Activated T-helper 1 cell treated with anti-CD3 and anti-CD28 coated beads, Interleukin-12 subunit alpha, Interleukin-12 subunit beta, Interleukin-2, Interleukin-4 antibody, amounts not matched to agents 30 ng/mL and 10 ng/mL and 1 ng/mL, durations not matched to agents 14 hours and 24 hours and 36 hours (primary cell): ENCODE measurements at regions of chr3 and their contacts with region 1.

Region 1: DNA sequence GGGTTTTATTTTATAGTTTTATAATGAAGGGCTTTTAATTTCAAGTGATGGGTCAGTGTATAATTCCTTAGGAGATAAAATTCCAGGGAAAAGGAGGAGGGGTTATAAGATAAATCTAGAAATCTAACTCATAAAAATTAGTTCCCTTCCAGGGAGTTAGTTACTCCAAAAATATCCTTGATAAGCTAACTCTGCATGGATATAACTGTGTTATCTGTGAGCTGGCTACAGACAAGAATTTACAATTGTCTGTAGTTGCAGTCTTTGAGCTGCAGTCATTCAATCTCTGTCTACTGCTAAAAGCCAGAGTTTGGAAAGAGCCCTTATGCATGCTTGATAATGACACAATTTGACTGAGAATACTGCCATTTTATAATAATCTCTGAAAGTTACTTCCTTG is 432.3 kb upstream of the TPRG1 start:
- DNase-seq: no peak
- H3K4me3 Mint-ChIP-seq: no peak overlapping the region
- H3K27ac Mint-ChIP-seq: no peak overlapping the region
- H3K4me1 Mint-ChIP-seq: no peaks in the 10 kb centered on the region
- H3K27me3 Mint-ChIP-seq: peaks cover 9% of the 10 kb centered on the region

Region 2: DNA sequence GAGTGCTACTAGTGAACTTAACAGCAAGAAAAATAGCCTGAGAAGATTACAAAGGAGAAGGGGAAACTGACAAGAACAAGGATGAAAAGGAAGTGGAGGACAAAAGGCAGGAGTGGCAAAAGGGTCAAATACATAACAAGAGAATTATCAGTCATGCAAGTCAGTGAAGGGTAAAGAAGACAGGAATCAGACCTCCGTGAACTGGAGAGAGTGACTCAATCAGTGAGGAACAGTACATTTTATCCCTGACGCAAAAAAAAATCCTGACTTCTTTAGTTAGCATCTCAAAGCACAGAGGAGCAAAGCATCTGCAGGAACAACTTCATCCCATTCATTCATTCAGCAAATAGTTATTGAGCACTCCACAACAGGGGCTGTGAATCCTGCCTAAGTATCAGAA is 1167.1 kb before region 1 on chr3:
- intact Hi-C with region 1: no loop called
- DNase-seq: no peak
- H3K4me3 Mint-ChIP-seq: no peak overlapping the region
- H3K27ac Mint-ChIP-seq: no peak overlapping the region
- H3K4me1 Mint-ChIP-seq: no peaks in the 10 kb centered on the region
- H3K27me3 Mint-ChIP-seq: peaks cover 16% of the 10 kb centered on the region

Region 3: DNA sequence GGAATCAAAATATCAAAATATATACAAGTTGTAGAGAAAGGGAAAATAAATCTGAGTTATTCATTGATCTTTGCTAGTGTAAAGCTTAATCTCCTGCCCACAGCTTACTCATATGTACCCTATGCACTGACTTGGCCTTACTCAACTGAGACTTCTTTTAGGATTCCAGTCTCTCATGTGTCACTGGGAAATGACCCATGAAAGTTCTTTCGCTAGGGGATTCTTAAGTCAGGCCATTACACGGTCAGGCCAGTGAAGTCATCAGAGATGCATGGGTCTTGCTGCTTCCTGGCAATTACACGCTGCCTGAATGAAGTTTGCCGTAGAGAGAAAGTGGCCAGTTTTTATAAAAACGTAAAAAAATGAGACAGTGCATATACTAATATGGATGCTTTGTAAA is 606.3 kb before region 1 on chr3:
- intact Hi-C with region 1: no loop called
- DNase-seq: no peak
- H3K4me3 Mint-ChIP-seq: no peak overlapping the region
- H3K27ac Mint-ChIP-seq: no peak overlapping the region
- H3K4me1 Mint-ChIP-seq: peaks cover 15% of the 10 kb centered on the region
- H3K27me3 Mint-ChIP-seq: no peaks in the 10 kb centered on the region

Region 4: GRCh38 chr3:188729422-188729821 is 10.1 kb before region 1 on chr3:
- intact Hi-C with region 1: no loop called
- DNase-seq: no peak
- H3K4me3 Mint-ChIP-seq: no peak overlapping the region
- H3K27ac Mint-ChIP-seq: no peak overlapping the region
- H3K4me1 Mint-ChIP-seq: peaks cover 21% of the 10 kb centered on the region
- H3K27me3 Mint-ChIP-seq: peaks cover 2% of the 10 kb centered on the region

Region 5: GRCh38 chr3:189606774-189607173 is 867.3 kb after region 1 on chr3:
- intact Hi-C with region 1: loop called (anchors 5 kb)
- DNase-seq: no peak
- H3K4me3 Mint-ChIP-seq: no peak overlapping the region
- H3K27ac Mint-ChIP-seq: no peak overlapping the region
- H3K4me1 Mint-ChIP-seq: no peaks in the 10 kb centered on the region
- H3K27me3 Mint-ChIP-seq: peaks cover 1% of the 10 kb centered on the region